ENCODE measurements at regions of chr18 and their contacts with region 1.

Region 1: DNA sequence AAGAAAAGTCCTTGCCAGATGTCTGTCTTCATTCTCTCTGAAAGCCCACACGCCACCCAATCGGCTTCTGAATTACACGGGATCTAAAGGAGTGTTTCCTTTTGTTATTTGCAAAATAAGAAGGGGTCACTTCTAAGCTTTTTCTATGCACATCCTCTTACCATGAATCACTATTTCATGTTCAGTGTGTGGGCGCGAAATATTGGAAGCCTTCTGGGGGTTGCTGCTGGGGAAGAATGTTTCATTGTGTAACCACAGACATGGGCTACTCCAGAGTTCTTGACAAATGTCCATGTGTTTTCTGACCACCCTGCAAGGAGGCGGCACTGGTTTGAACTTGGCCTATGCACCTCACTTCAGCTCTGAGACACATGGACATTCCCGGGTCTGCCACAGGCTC is 133.6 kb upstream of the APCDD1 start:
- DNase-seq: no peak
- ATAC-seq: no peak
- H3K4me3 Mint-ChIP-seq: no peak overlapping the region
- H3K27ac Mint-ChIP-seq: no peak overlapping the region
- H3K4me1 Mint-ChIP-seq: no peaks in the 10 kb centered on the region
- H3K27me3 Mint-ChIP-seq: peaks cover 5% of the 10 kb centered on the region

Region 2: GRCh38 chr18:10261302-10262276 is 59.2 kb before region 1 on chr18:
- CTCF ChIA-PET with region 1: no interaction called
- POLR2A ChIA-PET with region 1: no interaction called
- intact Hi-C with region 1: loop called in 1 of 2 experiments (anchors 10 kb)
- DNase-seq: no peak
- ATAC-seq: no peak
- H3K4me3 Mint-ChIP-seq: no peak overlapping the region
- H3K27ac Mint-ChIP-seq: no peak overlapping the region
- H3K4me1 Mint-ChIP-seq: no peaks in the 10 kb centered on the region
- H3K27me3 Mint-ChIP-seq: no peaks in the 10 kb centered on the region